Testis (tissue), 5 donors: ENCODE measurements at regions of chr1 and their contacts with region 1.

Region 1: GRCh38 chr1:21334214-21335087 is 44.2 kb upstream of the ECE1 start:
- DNase-seq: peak; percentile 76
- H3K4me3 ChIP-seq: no peak overlapping the region
- H3K27ac ChIP-seq: peak overlapping the region; percentile 39 to 84
- H3K4me1 ChIP-seq: peaks cover 76% of the 10 kb centered on the region
- H3K27me3 ChIP-seq: no peaks in the 10 kb centered on the region
- CTCF ChIP-seq: peak; percentile 75 to 87 (median 77)
- POLR2A ChIP-seq: no peak

Region 2: GRCh38 chr1:21261551-21262281 is 72.7 kb before region 1 on chr1:
- intact Hi-C with region 1: loop called (anchors 5 kb)
- DNase-seq: peak; percentile 52
- H3K4me3 ChIP-seq: no peak overlapping the region
- H3K27ac ChIP-seq: peak overlapping the region; percentile 86 to 92
- H3K4me1 ChIP-seq: peaks cover 51% of the 10 kb centered on the region
- H3K27me3 ChIP-seq: no peaks in the 10 kb centered on the region
- CTCF ChIP-seq: no peak
- POLR2A ChIP-seq: no peak

Region 3: DNA sequence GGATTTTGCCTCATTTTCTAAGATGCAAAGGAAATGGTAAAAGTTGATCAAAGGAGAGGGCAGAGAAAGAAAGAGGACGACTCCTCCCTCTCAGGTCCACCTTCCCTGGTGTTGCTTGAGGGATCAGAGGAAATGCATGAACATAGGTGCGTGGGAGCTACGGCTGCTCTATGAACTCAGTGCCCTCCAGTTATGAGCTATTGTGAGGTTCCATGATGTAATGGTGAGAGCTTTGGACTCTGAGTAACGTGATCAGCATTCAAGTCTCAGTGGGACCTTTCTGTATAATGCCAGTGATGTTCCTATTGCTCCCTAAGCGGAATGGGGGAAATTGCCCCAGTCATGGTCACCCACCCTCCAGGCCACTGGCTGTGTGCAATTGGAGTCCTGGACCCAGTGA is 79.6 kb after region 1 on chr1:
- intact Hi-C with region 1: no loop called
- DNase-seq: no peak
- H3K4me3 ChIP-seq: no peak overlapping the region
- H3K27ac ChIP-seq: no peak overlapping the region
- H3K4me1 ChIP-seq: no peaks in the 10 kb centered on the region
- H3K27me3 ChIP-seq: no peaks in the 10 kb centered on the region
- CTCF ChIP-seq: no peak
- POLR2A ChIP-seq: no peak